Sciatic nerve (tissue), 2 donors: ENCODE measurements at regions of chr7 and their contacts with region 1.

Region 1: DNA sequence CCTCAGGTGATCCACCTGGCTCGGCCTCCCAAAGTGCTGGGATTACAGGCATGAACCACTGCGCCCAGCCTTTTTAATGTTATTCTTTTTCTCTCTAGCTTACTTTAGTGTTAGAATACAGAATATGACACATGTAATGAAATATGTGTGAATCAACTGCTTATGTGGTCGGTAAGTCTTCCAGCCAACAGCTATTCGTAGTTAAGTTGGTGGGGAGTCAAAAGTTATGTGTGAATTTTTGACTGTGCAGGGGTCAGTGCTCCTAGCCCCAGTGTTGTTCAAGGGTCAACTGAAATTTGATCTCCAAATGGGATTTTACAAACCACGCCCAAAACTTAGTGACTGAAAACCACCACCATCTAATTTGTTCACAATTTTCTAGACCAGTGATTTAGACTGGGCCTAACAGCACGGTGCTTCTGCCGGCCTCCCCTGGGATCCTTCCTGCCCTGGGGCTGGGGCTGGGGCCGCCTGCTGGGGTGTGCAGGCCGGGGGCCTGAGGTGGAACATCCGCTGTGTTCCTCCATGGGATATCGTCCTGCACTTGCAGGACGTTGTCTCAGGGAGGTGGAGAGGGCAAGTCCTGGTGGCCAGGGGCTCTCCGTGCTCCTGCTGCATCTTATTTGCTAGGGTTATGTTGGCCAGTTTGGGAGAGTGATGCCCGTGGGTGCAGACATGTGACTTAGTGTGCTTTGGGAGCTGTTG is 24.5 kb upstream of the GRB10 start:
- DNase-seq: no peak
- ATAC-seq: no peak

Region 2: GRCh38 chr7:50768485-50769484 is 38.4 kb before region 1 on chr7:
- intact Hi-C with region 1: loop called (anchors 1 kb)
- DNase-seq: no peak
- ATAC-seq: no peak